ENCODE measurements at regions of chr5 and their contacts with region 1.

Region 1: GRCh38 chr5:147935032-147935431 is 28.7 kb upstream of the C5orf46 start:
- DNase-seq: no peak
- H3K4me3 ChIP-seq: no peak overlapping the region
- H3K27ac ChIP-seq: no peak overlapping the region
- H3K4me1 ChIP-seq: no peaks in the 10 kb centered on the region
- H3K27me3 ChIP-seq: no peaks in the 10 kb centered on the region
- CTCF ChIP-seq: peak; percentile 19 to 58 (median 42)
- EP300 ChIP-seq: no peak
- POLR2A ChIP-seq: no peak

Region 2: DNA sequence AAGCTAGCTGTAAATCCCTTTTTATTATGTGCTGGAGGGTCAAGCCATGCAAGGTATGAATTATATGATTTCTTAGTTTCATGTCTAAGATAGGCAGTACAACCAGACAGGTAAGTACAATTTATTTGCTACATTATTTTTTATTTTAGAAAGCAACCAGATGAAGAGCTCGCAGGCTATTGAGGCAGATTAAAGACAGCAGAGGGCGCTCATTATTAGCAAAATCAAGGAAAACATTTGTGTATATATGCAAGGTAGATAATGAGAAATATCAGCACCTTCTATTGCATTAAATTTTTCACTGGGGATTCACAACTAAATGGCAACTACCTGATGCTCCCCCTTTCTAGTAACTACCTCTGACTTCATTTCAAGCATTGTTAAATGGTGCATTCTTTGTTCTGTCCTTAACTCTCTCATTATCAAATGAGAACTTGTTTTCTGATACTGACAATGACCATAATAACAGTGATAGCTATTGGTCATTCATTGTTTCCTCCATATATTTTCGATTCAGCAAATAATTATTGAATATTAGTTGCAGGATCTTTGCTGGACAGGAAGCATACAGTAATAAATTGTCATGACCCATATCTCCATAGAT is 47.9 kb before region 1 on chr5:
- in situ Hi-C with region 1: loop called in 1 of 4 experiments (anchors 10 kb)
- intact Hi-C with region 1: no loop called
- DNase-seq: no peak
- H3K4me3 ChIP-seq: no peak overlapping the region
- H3K27ac ChIP-seq: no peak overlapping the region
- H3K4me1 ChIP-seq: peaks cover 0 to under 1% (median 0%) of the 10 kb centered on the region in 4 donors
- H3K27me3 ChIP-seq: no peaks in the 10 kb centered on the region
- CTCF ChIP-seq: peak; percentile 43 to 50 (median 48)
- EP300 ChIP-seq: no peak
- POLR2A ChIP-seq: no peak

Region 3: GRCh38 chr5:148606296-148606695 is 671.3 kb after region 1 on chr5:
- in situ Hi-C with region 1: no loop called
- intact Hi-C with region 1: no loop called
- DNase-seq: no peak
- H3K4me3 ChIP-seq: no peak overlapping the region
- H3K27ac ChIP-seq: no peak overlapping the region
- H3K4me1 ChIP-seq: peaks cover 0 to 9% (median 0%) of the 10 kb centered on the region in 4 donors
- H3K27me3 ChIP-seq: no peaks in the 10 kb centered on the region
- CTCF ChIP-seq: no peak
- EP300 ChIP-seq: no peak
- POLR2A ChIP-seq: no peak